ENCODE measurements at regions of chr4 and their contacts with region 1.

Region 1: DNA sequence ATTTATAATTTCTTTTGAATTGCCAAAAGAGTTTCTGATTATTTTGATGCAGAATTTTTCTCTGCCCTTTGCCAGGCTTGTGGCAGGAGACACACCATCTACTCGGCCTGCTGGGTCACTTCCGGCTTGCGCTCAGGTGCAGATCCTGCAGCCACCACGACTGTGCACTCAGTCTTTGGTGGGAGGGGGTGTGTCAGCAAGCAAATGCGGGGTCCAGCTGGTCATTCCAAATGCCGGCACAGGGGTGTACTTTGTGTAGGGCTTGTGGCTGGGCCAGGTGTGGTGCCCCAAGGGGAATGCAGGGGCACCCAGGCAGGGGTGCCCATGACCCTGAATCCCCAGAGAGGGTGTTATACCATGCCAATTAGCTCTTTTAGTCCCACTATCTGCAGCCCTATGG is 673.0 kb downstream of the TLL1 start:
- DNase-seq: no peak
- ATAC-seq: no peak

Region 2: GRCh38 chr4:166512267-166512666 is 33.7 kb before region 1 on chr4:
- intact Hi-C with region 1: loop called (anchors 2 kb)
- DNase-seq: no peak
- ATAC-seq: no peak